OCI-LY7 (cell line): ENCODE measurements at regions of chr15 and their contacts with region 1.

Region 1: GRCh38 chr15:38563723-38564519 is 693 bp downstream of the RASGRP1 start:
- DNase-seq: peak; percentile 83
- H3K4me3 ChIP-seq: peak overlapping the region; percentile 73
- H3K27ac ChIP-seq: peak overlapping the region; percentile 42
- H3K4me1 ChIP-seq: peaks cover 27% of the 10 kb centered on the region
- CTCF ChIP-seq: peak; percentile 93

Region 2: GRCh38 chr15:38440353-38441129 is 123.4 kb before region 1 on chr15:
- CTCF ChIA-PET with region 1: interaction called, 4 read pairs
- POLR2A ChIA-PET with region 1: no interaction called
- intact Hi-C with region 1: loop called (anchors 2 kb)
- DNase-seq: peak; percentile 70
- H3K4me3 ChIP-seq: no peak overlapping the region
- H3K27ac ChIP-seq: no peak overlapping the region
- H3K4me1 ChIP-seq: peaks cover 3% of the 10 kb centered on the region
- CTCF ChIP-seq: peak; percentile 98

Region 3: DNA sequence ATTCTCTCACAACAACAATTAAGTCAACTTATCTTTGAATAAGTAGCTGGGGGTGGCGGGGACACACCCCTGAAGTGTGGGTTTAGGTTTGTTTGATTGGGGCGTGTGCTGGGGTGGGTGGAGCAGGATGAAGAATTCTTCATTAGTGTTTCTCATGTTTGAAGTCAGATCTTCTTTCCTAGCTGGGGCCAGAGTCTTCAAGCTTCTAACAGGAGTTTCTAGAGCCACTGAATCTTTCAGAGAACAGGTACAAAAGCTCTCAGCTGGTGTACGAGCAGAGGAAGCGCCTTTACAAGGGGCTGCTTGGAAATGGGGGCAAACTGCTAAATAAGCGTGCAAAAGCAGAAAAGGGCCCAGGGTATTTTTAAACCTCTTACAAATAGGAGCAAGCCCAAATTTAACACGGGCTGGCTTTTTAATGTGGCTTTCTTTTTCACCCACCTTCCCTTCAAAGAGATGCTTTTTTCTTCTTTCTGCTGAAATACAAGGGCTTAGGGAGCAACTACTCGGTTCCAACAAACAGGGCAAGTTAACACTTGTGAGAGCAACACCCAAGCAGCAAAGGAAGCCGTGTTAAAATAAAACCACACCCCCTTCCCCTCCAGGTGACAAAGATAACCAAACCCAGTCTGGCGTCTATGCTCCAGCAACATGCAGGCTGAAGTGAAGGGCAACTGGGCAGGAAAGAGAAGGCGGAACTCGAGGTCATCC is 87.6 kb after region 1 on chr15:
- CTCF ChIA-PET with region 1: no interaction called
- POLR2A ChIA-PET with region 1: interaction called, 3 read pairs
- intact Hi-C with region 1: loop called (anchors 1 kb)
- DNase-seq: peak; percentile 88
- H3K4me3 ChIP-seq: peak overlapping the region; percentile 53
- H3K27ac ChIP-seq: peak overlapping the region; percentile 93
- H3K4me1 ChIP-seq: peaks cover 40% of the 10 kb centered on the region
- CTCF ChIP-seq: no peak

Region 4: DNA sequence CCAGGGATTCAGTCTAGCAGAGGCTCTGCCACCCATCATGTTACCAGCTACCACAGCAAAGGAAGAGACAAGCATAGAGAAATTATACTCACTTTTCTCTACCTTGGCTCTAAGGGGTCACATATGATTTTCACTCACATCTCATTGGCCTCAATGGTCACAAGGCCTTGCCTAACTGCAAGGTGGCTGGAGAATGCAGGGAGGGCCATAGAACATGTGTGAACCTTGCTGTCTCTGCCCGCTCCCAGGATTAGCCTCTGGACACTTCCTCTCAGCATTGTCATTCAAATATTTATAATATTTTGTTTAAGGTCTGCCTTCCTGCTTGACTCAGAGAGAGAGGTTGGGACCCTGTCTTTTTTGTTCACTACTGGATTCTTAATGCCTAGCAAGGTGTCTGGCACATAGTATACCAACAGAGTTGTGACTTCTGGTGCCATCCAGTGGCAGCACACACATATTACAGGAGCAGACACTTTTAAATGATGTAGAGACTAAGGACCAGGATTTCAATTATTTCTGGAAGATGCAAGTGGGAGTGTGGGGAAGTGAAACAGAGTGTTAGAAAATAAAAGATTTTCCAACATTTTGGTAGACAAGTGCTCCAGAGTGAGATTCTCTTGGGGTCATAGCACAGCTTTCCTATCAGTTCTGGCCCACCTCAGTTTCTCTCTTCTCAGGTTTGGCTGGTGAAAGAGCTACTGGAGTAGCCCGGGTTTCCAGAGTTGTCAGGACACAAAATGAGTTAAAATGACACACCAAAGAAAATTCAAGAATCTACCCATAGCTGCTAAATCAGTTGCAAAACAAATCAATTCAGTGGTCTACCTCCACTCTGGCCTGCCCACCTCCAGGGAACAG is 119.7 kb after region 1 on chr15:
- CTCF ChIA-PET with region 1: interaction called, 20 read pairs
- POLR2A ChIA-PET with region 1: interaction called, 11 read pairs
- intact Hi-C with region 1: loop called (anchors 1 kb)
- DNase-seq: peak; percentile 85
- H3K4me3 ChIP-seq: no peak overlapping the region
- H3K27ac ChIP-seq: no peak overlapping the region
- H3K4me1 ChIP-seq: peaks cover 18% of the 10 kb centered on the region
- CTCF ChIP-seq: peak; percentile 99

Region 5: GRCh38 chr15:38690689-38691332 is 126.9 kb after region 1 on chr15:
- CTCF ChIA-PET with region 1: interaction called, 13 read pairs
- POLR2A ChIA-PET with region 1: interaction called, 3 read pairs
- intact Hi-C with region 1: loop called (anchors 5 kb)
- DNase-seq: peak; percentile 83
- H3K4me3 ChIP-seq: no peak overlapping the region
- H3K27ac ChIP-seq: no peak overlapping the region
- H3K4me1 ChIP-seq: peaks cover 27% of the 10 kb centered on the region
- CTCF ChIP-seq: peak; percentile 97

Region 6: GRCh38 chr15:38745126-38745525 is 181.2 kb after region 1 on chr15:
- CTCF ChIA-PET with region 1: no interaction called
- POLR2A ChIA-PET with region 1: no interaction called
- intact Hi-C with region 1: no loop called
- DNase-seq: no peak
- H3K4me3 ChIP-seq: no peak overlapping the region
- H3K27ac ChIP-seq: no peak overlapping the region
- H3K4me1 ChIP-seq: no peaks in the 10 kb centered on the region
- CTCF ChIP-seq: no peak